ENCODE measurements at regions of chr2 and their contacts with region 1.

Region 1: GRCh38 chr2:131413148-131413747 is 49.3 kb upstream of the RAB6D start:
- DNase-seq: peak; percentile 48
- CTCF ChIP-seq: peak; percentile 75

Region 2: DNA sequence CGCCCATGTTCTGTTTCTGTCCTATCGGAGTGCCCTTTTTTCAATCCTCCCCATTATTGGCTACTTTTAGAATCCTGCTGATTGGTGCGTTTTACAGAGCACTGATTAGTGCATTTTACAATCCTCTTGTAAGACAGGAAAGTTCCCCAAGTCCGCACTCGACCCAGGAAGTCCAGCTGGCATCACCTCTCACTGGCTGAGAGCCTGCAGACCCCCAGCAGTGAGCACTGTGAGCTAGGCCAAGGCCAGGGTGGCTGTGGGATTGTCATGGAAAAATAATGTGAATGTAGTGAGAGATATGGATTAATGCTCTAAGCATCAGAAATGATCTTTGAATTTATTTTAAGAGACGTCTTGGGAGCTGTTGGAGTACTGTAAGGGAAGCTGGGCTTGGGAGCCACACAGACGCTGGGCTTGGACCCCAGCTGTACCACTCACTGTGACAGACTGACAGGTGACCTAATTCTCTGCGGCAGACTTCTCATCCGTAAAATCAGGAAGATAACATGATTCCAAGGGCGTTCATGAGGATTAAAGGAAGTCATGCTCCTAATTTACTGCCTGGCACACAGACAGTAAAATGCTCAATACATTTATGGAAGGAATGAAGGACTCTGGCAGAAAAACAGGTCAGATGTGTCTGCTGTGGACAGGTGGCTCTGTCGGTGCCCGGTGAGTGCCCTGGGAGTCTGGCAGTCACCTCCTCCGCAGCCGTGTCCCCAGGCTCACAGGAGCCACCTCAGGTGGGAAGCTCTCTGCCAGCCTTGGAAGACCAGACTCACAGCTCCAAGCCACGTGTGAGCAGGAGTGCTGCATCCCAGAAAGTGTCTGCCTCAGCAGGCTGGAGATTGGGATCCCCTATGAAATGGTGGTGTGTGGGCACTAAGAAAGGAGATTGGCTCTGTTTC is 425.5 kb before region 1 on chr2:
- CTCF ChIA-PET with region 1: no interaction called
- POLR2A ChIA-PET with region 1: no interaction called
- DNase-seq: no peak
- CTCF ChIP-seq: no peak

Region 3: DNA sequence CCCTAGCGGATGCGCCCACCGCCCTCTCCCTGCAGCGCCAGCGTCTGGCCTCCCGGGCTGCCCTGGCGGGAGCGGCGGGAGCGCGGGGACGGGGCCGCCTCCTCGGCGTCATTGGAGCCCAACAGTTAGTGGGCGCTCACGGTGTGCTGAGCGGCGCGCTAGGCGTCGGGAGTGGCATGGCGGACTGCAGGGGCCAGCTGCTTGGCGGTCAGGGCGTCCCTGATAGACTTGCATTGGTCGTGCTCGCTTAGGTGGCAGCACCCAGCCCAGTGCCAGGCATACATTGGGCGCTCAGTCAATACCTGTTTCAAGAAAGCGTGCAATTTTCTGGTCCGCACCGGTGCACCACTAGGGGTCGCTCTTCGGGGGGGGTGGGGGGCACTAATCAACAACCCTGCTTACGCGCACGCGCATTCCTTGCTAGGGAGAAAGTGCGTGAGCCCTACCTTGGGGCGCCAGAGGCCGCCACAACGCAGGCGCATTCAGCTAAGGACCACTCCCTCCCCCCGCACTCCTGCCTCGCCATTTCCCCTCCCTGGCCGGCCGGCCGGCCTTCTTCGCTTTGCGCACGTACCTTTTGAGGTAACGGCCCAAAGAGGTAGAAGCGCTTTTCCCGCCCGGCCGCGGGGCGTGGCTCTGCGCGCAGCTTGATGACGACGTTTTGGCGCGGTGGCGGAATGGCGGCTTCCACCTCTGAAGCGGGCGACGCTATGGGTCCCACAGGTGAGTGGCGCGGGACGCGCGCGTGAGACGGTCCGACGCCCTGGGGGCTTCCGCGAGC is 79.4 kb after region 1 on chr2:
- CTCF ChIA-PET with region 1: interaction called, 21 read pairs
- POLR2A ChIA-PET with region 1: no interaction called
- DNase-seq: peak; percentile 97
- CTCF ChIP-seq: peak; percentile 78

Measured in GM10248 (cell line).